AG04449 (cell line): ENCODE measurements at regions of chr1 and their contacts with region 1.

Region 1: GRCh38 chr1:40951943-40952743 is 27.4 kb upstream of the CTPS1 start:
- DNase-seq: no peak
- H3K4me3 ChIP-seq: no peak overlapping the region
- CTCF ChIP-seq: peak; percentile 96

Region 2: DNA sequence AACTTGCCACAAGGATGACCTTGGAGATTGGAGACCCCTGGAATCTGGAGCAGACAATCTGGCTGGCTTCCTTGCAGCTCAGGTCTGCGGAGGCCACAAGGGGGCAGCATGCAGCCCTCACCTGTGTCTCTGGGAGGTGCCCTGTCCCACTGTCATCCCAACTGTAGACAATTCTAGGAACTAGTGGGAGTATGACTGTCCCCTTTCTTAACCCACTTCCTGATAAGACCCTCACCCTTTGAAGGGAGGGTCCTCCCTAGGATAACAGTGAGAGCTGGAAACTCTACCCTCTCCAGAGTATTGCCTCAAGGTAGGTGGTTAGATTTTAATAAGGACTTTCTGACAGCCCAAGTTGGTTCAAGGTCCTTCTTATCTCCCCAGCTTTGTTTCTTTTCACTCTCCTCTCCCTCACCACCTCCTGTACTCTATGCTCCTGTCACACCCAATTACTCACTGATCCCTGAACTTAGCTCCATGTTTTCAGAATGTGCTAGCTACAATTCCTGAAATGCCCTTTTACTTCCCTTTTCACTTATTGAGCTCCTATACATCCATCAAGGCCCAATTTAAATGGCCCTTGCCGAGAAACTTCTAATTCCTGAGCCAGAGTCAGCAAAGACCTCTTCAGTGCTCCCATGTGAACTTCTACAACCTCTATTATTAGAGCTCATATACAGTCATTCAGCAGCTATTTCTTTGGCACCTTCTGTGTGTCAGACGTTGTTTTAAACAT is 177.7 kb before region 1 on chr1:
- CTCF ChIA-PET with region 1: interaction called, 95 read pairs
- POLR2A ChIA-PET with region 1: no interaction called
- DNase-seq: no peak
- H3K4me3 ChIP-seq: no peak overlapping the region
- CTCF ChIP-seq: peak; percentile 75

Region 3: DNA sequence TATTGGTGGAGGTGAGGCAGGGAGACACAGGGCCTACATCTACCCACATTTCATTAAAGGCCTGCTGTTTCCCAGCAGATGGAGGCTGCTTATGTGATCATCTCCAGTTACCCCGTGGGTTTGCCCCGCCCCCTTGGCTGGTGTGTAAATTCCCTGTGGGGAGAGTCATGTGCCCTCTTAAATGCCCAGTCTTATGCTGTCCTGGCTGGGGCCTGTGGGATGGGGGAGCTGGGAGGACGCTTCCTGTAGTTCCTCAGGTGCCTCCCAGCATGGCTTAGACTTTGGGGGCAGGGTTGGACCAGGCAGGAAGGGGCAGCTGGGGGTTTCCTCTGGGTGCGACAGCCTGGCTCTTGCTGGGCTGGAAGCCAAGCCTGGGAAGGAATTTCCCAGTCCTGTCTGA is 74.4 kb before region 1 on chr1:
- CTCF ChIA-PET with region 1: interaction called, 37 read pairs
- POLR2A ChIA-PET with region 1: no interaction called
- DNase-seq: peak; percentile 67
- H3K4me3 ChIP-seq: no peak overlapping the region
- CTCF ChIP-seq: no peak

Region 4: GRCh38 chr1:40932018-40932417 is 20.1 kb before region 1 on chr1:
- CTCF ChIA-PET with region 1: interaction called, 249 read pairs
- POLR2A ChIA-PET with region 1: no interaction called
- DNase-seq: no peak
- H3K4me3 ChIP-seq: no peak overlapping the region
- CTCF ChIP-seq: no peak

Region 5: GRCh38 chr1:40973912-40974311 is 21.8 kb after region 1 on chr1:
- CTCF ChIA-PET with region 1: interaction called, 282 read pairs
- POLR2A ChIA-PET with region 1: interaction called, 3 read pairs
- DNase-seq: no peak
- H3K4me3 ChIP-seq: no peak overlapping the region
- CTCF ChIP-seq: no peak

Region 6: DNA sequence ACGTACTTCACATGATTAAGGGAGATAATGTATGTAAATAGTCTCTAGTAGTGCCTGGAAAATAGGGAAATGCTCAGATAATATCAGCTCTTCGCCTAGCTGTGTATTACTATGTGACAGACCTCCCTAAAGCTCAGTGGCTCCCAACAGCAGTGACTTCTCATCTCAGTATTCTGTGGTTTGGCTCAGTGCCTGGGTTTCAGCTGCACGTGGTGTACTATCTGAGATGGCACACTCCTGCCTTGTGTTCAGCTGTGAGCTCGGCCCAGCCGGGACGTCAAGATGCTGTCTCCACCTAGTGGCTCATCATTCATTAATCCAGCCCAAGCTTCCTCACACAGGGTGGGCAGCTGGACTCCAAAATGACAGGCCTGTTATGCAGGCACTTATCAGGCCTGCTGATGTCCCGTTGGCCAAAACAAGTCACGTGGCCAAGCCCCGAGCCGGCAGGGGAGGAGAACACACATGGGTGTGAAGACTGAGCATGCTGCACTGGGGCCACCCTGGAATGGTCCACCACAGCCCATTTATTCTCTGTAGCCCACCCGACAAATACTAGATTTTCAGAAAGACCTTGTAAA is 51.6 kb after region 1 on chr1:
- CTCF ChIA-PET with region 1: interaction called, 28 read pairs
- POLR2A ChIA-PET with region 1: interaction called, 3 read pairs
- DNase-seq: peak; percentile 97
- H3K4me3 ChIP-seq: no peak overlapping the region
- CTCF ChIP-seq: peak; percentile 70

Region 7: DNA sequence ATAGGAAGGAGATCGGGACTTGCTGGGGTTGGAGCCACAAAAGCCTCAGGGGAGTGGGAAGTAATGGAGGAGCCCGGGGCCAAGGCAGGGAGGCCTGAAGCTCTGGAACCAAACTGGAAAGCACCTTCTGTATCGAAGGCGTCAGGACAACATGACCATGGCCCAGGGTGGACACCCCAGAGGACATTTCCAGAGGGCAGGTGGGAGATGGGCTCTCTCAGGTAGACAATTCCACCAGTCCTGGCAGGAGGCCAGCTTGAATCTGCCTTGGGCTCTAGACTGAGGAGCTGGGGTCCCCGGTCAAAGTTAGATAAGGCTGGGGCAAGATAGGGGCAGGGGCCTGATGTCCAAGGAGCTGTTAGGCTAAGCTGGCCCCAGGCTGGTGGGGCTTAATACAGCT is 637.3 kb after region 1 on chr1:
- CTCF ChIA-PET with region 1: no interaction called
- POLR2A ChIA-PET with region 1: no interaction called
- DNase-seq: no peak
- H3K4me3 ChIP-seq: no peak overlapping the region
- CTCF ChIP-seq: no peak